Head of caudate nucleus (tissue), 42 donors: ENCODE measurements at regions of chr20 and their contacts with region 1.

Region 1: GRCh38 chr20:33810885-33811777 is at the start of gene CHMP4B:
- DNase-seq: peak; percentile 98 to 100 (median 99)

Region 2: GRCh38 chr20:33971147-33971975 is 160.2 kb after region 1 on chr20:
- intact Hi-C with region 1: no loop called
- DNase-seq: no peak

Region 3: DNA sequence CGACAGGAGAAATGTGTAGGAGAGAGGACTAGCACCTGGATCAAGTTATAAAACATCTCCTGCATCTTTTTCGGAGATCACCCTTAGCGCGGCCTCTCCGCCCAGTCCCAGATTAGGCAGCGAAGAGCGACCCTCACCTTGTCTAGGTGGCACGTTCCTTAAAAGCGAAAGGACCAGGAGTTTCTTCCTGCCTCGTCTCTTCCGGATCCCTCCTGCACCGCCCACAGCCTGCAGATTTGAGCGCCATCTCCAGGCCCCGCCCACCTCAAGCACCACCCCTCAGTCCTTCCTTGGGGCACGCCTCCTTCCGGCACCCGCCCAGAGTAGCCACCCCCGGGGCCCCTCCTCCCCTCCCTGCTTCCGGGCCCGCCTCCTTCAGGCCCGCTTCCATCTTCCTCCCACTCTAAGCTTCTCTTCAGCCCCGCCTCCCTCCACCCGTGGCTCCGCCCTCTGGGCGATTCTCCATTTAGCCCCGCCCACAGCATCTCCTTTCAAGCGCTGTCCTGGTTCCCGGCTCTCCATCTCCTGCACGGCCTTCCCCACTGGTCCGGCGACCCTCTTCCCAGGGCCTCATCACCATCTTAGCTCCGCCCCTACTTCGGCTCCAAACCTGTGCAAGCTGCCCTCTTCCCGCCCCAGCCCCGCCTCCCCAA is 181.9 kb after region 1 on chr20:
- intact Hi-C with region 1: loop called (anchors 5 kb)
- DNase-seq: peak; percentile 98 to 100 (median 100)

Region 4: DNA sequence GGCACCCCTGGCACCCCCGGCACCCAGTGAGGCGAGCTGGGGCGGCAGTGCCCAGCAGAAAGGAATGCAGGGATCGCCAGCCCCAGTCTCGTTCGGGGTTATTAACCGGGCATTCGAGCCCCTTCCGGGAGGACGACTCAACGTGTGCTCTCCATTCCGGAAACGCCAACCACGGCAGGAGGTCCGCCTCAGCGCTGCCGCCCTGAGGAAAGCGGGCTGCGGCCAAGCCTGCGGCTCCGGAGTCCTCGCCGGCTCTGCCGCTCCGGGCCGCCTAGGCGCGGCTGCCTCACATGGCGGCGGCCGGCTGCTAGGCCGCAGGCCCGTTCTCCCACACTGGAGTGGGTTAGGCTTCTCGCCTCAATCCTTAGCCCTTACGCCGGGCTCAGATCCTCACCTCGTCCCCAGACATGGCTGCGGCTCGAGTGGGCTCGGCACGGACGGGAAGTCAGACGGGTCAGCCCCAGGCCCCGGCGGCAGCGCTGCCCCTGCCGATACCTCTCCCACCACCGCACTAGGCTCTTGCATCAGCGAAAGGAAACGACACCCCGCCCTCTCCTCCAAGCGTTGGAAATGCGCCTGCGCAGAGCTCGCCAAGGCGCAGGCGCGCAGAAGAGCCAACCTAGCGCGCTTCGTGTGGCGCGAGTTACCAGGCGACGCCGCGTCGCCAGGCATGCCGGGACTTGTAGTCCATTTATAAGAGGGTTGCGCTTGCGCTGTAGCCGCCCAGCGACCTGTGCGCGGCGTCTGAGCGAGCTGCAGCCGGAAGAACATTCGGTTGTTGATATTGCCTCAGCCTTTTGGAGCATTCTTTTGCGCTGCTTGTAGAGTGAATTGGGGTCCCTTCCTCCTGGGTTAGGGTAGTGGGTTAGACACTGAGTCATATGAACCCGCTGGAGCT is 300.8 kb after region 1 on chr20 and contains the start of gene EIF2S2:
- intact Hi-C with region 1: loop called (anchors 2 kb)
- DNase-seq: peak; percentile 84 to 97 (median 92)

Region 5: DNA sequence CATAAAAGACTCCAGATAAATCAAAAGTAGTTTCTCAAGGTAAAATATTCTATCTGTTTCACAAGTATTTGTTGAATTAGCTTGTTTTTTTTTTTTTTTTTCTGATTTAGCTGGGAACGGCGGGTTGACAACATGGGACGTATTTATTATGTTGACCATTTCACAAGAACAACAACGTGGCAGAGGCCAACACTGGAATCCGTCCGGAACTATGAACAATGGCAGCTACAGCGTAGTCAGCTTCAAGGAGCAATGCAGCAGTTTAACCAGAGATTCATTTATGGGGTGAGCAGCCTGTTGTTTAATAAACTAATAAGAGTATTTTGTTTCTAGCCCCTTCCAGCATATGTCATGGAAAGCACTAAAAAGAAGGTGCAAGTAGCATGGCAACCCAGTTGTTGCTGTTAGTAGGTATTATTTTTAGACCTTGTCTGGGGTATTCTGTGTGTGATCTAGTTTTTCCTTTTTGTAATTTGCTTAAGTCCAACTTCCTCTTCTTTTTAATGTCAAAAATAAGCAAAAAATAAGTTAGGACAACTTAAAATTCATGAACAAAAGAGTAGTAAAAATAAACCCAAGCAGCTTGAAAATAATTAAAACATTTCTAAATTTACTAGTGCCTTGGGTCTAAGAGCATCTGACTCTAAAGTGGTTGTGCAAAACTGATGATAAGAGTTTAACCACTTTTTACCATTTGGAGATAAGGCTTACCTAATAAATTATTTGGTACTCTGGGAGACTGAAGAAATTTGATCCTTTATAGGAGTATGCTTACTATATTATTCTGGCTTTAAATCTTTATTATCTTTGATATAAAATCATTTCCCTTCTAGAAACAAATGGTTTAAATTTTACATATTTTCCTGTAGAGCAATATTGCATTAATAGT is 634.3 kb after region 1 on chr20:
- intact Hi-C with region 1: no loop called
- DNase-seq: peak in 18 of 42 donors; percentile 22 to 75 (median 41)